Activated CD8-positive, alpha-beta T cell treated with anti-CD3 and anti-CD28 coated beads, Interleukin-2, amount 10 ng/mL, durations not matched to agents 7 days and 5 days (primary cell): ENCODE measurements at regions of chr17 and their contacts with region 1.

Region 1: DNA sequence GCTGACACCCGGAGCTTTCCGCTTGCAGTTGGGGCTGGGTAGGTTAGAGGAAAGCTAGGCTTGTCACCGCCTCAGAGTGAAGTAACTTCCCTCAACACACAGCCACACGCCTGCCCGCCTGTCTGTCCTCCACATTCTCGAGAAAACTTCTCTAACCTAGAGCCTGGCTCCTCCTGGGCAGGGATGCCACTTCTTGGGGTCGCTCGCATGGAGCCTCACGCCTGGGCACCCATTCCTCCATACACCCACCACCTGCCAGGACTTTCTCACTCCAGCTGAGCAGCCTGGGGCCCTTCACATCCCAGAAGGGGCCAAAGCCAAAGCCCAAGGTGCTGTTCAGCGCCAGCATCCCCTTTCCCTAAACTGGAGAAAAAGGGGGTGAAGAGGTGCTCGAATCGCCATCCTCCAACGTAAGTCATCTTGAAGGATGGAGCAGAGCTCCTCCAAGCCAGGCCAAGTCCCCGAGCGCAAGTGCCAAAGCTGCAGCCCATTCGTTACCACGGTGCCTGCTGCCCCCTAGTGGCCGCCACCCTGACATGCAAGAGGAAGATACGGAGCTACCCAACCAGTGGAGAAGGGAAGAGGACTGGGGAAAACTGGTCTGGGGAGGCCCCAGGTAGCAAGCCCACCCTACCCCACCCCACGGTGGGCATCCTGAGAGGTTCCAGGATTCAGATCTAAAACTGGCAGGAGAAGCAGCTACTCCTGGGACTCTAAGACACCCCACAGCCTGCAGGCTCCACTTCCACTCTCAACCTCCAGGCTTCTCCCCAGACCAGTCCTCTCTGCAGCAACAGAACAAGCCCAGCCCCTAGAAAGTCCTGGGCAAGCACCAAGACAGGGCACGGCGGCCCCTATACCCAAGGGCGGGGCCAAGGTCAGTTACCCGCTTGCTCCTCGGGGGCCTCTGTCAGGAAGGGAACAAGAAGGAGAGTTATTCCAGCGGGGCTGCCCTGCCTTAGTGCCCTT is 63.1 kb downstream of the MYO18A start:
- DNase-seq: peak; percentile 81
- ATAC-seq: peak; percentile 59
- H3K4me3 Mint-ChIP-seq: no peak overlapping the region
- H3K27ac Mint-ChIP-seq: no peak overlapping the region
- H3K4me1 Mint-ChIP-seq: peaks cover 9% of the 10 kb centered on the region
- H3K27me3 Mint-ChIP-seq: no peaks in the 10 kb centered on the region

Region 2: GRCh38 chr17:28925912-28926365 is 191.1 kb before region 1 on chr17:
- CTCF ChIA-PET with region 1: interaction called, 13 read pairs
- POLR2A ChIA-PET with region 1: no interaction called
- DNase-seq: peak; percentile 70
- ATAC-seq: peak; percentile 94
- H3K4me3 Mint-ChIP-seq: peak overlapping the region; percentile 26
- H3K27ac Mint-ChIP-seq: peak overlapping the region; percentile 88
- H3K4me1 Mint-ChIP-seq: peaks cover 55% of the 10 kb centered on the region
- H3K27me3 Mint-ChIP-seq: no peaks in the 10 kb centered on the region

Region 3: GRCh38 chr17:28940675-28941074 is 176.4 kb before region 1 on chr17:
- CTCF ChIA-PET with region 1: no interaction called
- POLR2A ChIA-PET with region 1: no interaction called
- DNase-seq: no peak
- ATAC-seq: no peak
- H3K4me3 Mint-ChIP-seq: no peak overlapping the region
- H3K27ac Mint-ChIP-seq: no peak overlapping the region
- H3K4me1 Mint-ChIP-seq: peaks cover 73% of the 10 kb centered on the region
- H3K27me3 Mint-ChIP-seq: no peaks in the 10 kb centered on the region

Region 4: GRCh38 chr17:28973425-28973824 is 143.7 kb before region 1 on chr17:
- CTCF ChIA-PET with region 1: interaction called, 36 read pairs
- POLR2A ChIA-PET with region 1: no interaction called
- DNase-seq: no peak
- ATAC-seq: no peak
- H3K4me3 Mint-ChIP-seq: no peak overlapping the region
- H3K27ac Mint-ChIP-seq: no peak overlapping the region
- H3K4me1 Mint-ChIP-seq: peaks cover under 1% of the 10 kb centered on the region
- H3K27me3 Mint-ChIP-seq: peaks cover 6% of the 10 kb centered on the region

Region 5: GRCh38 chr17:29133146-29133713 is 16.1 kb after region 1 on chr17:
- CTCF ChIA-PET with region 1: interaction called, 414 read pairs
- POLR2A ChIA-PET with region 1: interaction called, 3 read pairs
- DNase-seq: no peak
- ATAC-seq: peak; percentile 15
- H3K4me3 Mint-ChIP-seq: no peak overlapping the region
- H3K27ac Mint-ChIP-seq: peak overlapping the region; percentile 20
- H3K4me1 Mint-ChIP-seq: peaks cover 52% of the 10 kb centered on the region
- H3K27me3 Mint-ChIP-seq: no peaks in the 10 kb centered on the region

Region 6: DNA sequence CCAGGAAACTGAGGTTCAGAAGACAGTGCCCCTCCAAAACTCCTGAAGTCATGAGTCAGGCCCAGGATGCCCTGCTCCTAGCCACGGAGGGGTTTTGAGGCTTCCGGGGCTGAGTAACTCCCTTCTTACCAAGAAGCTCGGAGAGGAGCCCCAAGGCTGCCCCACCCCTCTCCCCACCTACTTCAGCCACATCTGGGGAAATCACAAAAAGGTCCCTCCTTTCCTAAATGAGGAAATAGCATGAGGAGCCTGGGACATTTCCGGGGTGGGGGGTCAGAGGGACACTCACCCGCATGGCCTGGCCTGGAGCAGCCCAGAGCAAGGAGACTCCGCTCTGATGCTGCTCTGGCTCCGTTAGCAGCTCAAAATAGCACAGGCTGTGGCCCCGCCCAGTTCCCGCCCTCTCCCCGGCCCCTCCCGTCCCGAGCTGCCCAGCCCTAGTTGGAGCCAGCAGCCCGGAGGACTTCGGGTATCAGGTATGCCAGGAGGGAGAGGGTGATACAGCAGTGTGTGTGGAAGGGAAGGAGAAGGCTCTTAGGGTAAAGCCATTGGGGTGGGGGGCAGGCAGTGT is 23.0 kb after region 1 on chr17:
- CTCF ChIA-PET with region 1: interaction called, 414 read pairs
- POLR2A ChIA-PET with region 1: interaction called, 9 read pairs
- DNase-seq: peak; percentile 95
- ATAC-seq: peak; percentile 76
- H3K4me3 Mint-ChIP-seq: peak overlapping the region; percentile 92
- H3K27ac Mint-ChIP-seq: peak overlapping the region; percentile 98
- H3K4me1 Mint-ChIP-seq: peaks cover 70% of the 10 kb centered on the region
- H3K27me3 Mint-ChIP-seq: no peaks in the 10 kb centered on the region

Region 7: GRCh38 chr17:29252101-29252866 is 135.2 kb after region 1 on chr17:
- CTCF ChIA-PET with region 1: interaction called, 10 read pairs
- POLR2A ChIA-PET with region 1: no interaction called
- DNase-seq: no peak
- ATAC-seq: no peak
- H3K4me3 Mint-ChIP-seq: no peak overlapping the region
- H3K27ac Mint-ChIP-seq: no peak overlapping the region
- H3K4me1 Mint-ChIP-seq: peaks cover 4% of the 10 kb centered on the region
- H3K27me3 Mint-ChIP-seq: no peaks in the 10 kb centered on the region